Posterior vena cava (tissue), 2 donors: ENCODE measurements at regions of chr22 and their contacts with region 1.

Region 1: GRCh38 chr22:24175160-24175808 is 6.0 kb upstream of the SUSD2 start:
- DNase-seq: peak; percentile 95

Region 2: GRCh38 chr22:24106385-24107381 is 68.6 kb before region 1 on chr22:
- intact Hi-C with region 1: loop called (anchors 5 to 10 kb)
- DNase-seq: no peak